PC-3 (cell line): ENCODE measurements at regions of chr2 and their contacts with region 1.

Region 1: GRCh38 chr2:36507408-36507812 is 90.6 kb downstream of the FEZ2 start:
- DNase-seq: peak; percentile 78
- ATAC-seq: peak; percentile 72
- H3K4me3 ChIP-seq: no peak overlapping the region
- H3K27ac ChIP-seq: no peak overlapping the region
- H3K4me1 ChIP-seq: peaks cover 30% of the 10 kb centered on the region
- H3K27me3 ChIP-seq: no peaks in the 10 kb centered on the region
- CTCF ChIP-seq: peak; percentile 95

Region 2: GRCh38 chr2:36461039-36461681 is 46.2 kb before region 1 on chr2:
- CTCF ChIA-PET with region 1: interaction called, 5 read pairs
- POLR2A ChIA-PET with region 1: no interaction called
- intact Hi-C with region 1: loop called (anchors 2 kb)
- DNase-seq: peak; percentile 92
- ATAC-seq: peak; percentile 91
- H3K4me3 ChIP-seq: peak overlapping the region; percentile 22; the same call in 1 of the 2 replicates
- H3K27ac ChIP-seq: peak overlapping the region; percentile 81
- H3K4me1 ChIP-seq: peaks cover 36% of the 10 kb centered on the region
- H3K27me3 ChIP-seq: no peaks in the 10 kb centered on the region
- CTCF ChIP-seq: no peak

Region 3: GRCh38 chr2:36478332-36478738 is 29.1 kb before region 1 on chr2:
- CTCF ChIA-PET with region 1: no interaction called
- POLR2A ChIA-PET with region 1: no interaction called
- intact Hi-C with region 1: loop called (anchors 2 kb)
- DNase-seq: peak; percentile 96
- ATAC-seq: peak; percentile 83
- H3K4me3 ChIP-seq: no peak overlapping the region
- H3K27ac ChIP-seq: peak overlapping the region; percentile 68
- H3K4me1 ChIP-seq: peaks cover 46% of the 10 kb centered on the region
- H3K27me3 ChIP-seq: no peaks in the 10 kb centered on the region
- CTCF ChIP-seq: no peak

Region 4: GRCh38 chr2:36486546-36487044 is 20.8 kb before region 1 on chr2:
- CTCF ChIA-PET with region 1: no interaction called
- POLR2A ChIA-PET with region 1: no interaction called
- intact Hi-C with region 1: loop called (anchors 1 kb)
- DNase-seq: peak; percentile 76
- ATAC-seq: peak; percentile 62
- H3K4me3 ChIP-seq: no peak overlapping the region
- H3K27ac ChIP-seq: peak overlapping the region; percentile 27; the same call in 1 of the 2 replicates
- H3K4me1 ChIP-seq: peaks cover 75% of the 10 kb centered on the region
- H3K27me3 ChIP-seq: no peaks in the 10 kb centered on the region
- CTCF ChIP-seq: no peak

Region 5: GRCh38 chr2:36544638-36545338 is 37.4 kb after region 1 on chr2:
- CTCF ChIA-PET with region 1: interaction called, 3 read pairs
- POLR2A ChIA-PET with region 1: no interaction called
- intact Hi-C with region 1: loop called (anchors 1 kb)
- DNase-seq: peak; percentile 35
- ATAC-seq: peak; percentile 5; the same call in 1 of the 2 replicates
- H3K4me3 ChIP-seq: no peak overlapping the region
- H3K27ac ChIP-seq: no peak overlapping the region
- H3K4me1 ChIP-seq: peaks cover 1% of the 10 kb centered on the region
- H3K27me3 ChIP-seq: no peaks in the 10 kb centered on the region
- CTCF ChIP-seq: peak; percentile 65